Mammary epithelial cell (primary cell): ENCODE measurements at regions of chr7 and their contacts with region 1.

Region 1: GRCh38 chr7:45863715-45864114 is 9.2 kb downstream of the CCDC201 start:
- DNase-seq: no peak
- H3K4me3 ChIP-seq: no peak overlapping the region
- H3K27ac ChIP-seq: no peak overlapping the region
- H3K4me1 ChIP-seq: no peaks in the 10 kb centered on the region
- H3K27me3 ChIP-seq: no peaks in the 10 kb centered on the region
- CTCF ChIP-seq: no peak

Region 2: DNA sequence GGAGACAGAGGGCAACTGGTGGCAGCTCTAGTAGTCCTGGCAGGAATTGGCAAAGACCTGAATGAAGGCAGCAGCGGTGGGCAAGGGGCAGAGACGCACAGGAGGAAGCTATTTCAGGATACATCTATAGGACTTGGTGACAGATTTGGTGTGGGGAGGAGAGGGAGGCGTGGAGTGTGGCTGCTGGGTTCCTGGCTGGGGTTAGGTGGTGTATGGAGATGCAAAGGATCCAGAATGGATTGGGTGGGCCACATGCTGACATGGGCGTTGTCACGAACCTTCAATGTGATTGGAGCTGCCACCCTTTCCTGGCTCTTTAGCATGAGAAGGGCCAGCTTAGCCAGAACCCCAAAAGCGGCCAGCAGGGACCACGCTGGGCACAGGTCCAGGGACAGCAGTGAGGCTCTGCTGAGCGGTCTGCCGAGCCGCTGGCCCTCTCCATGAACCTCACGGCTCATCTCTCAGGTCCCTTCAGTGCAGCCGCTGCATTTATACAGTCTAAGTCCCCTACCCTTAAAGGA is 299.7 kb before region 1 on chr7:
- CTCF ChIA-PET with region 1: no interaction called
- dilution Hi-C with region 1: no loop called
- in situ Hi-C with region 1: no loop called
- intact Hi-C with region 1: loop called (anchors 10 kb)
- DNase-seq: no peak
- H3K4me3 ChIP-seq: no peak overlapping the region
- H3K27ac ChIP-seq: no peak overlapping the region
- H3K4me1 ChIP-seq: peaks cover 4% of the 10 kb centered on the region
- H3K27me3 ChIP-seq: no peaks in the 10 kb centered on the region
- CTCF ChIP-seq: no peak